ENCODE measurements at regions of chr19 and their contacts with region 1.

Region 1: DNA sequence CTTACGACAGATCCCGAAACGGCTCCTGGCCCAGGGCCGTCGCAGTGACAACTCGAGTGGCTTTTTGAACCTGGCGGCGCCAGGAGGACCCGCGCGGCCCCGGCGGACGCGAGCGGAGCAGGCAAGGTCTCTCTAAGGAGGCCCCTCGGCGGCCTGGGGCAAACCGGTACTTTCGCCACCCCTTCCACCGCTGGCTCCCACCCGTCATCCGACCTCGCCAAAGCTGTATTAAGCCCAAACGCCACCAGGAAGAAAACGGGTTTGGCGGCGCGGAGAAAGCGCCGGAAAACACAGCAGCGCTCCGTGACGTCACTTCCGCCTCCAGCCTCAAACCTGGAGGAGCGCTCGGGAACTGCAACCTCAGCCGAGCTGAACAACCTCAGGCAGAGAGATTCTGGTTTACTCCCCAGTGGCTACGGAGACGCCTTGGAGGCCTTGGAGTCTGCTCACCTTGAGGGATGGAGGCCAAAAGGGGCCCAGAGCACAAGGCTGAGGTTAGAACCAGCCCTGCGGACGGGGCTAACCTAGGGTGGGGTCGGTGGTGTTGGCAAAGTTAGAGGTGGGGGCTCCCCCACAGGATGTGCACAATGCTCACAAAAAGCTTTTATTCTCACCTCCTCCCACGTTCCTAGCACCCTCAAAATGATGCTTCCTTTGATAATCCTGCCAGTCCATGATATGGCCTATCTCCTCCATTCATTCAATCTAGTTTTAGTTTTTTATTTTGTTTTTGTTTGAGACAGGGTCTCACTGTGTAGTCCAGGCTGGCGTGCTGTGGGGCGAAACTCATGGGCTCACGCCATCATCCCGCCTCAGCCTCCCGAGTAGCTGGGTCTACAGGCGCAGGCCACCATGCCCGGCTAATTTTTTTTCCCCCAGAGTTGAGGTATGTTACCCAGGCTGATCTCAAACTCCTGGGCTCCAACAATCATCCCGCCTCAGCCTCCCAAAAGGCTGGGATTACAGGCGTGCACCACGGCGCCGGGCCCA is at the start of gene ZNF266:
- DNase-seq: peak; percentile 95
- ATAC-seq: peak; percentile 92
- H3K4me3 Mint-ChIP-seq: peak within 1 kb of the TSS; percentile 97
- H3K27ac Mint-ChIP-seq: peak within 1 kb of the TSS; percentile 99
- H3K4me1 Mint-ChIP-seq: peaks cover 28% of the 10 kb centered on the region
- H3K27me3 Mint-ChIP-seq: no peaks in the 10 kb centered on the region
- total RNA-seq, gene ZNF266: 25.3 to 25.5 TPM

Region 2: GRCh38 chr19:9205501-9206113 is 230.0 kb before region 1 on chr19:
- CTCF ChIA-PET with region 1: interaction called, 12 read pairs
- POLR2A ChIA-PET with region 1: no interaction called
- DNase-seq: peak; percentile 74
- ATAC-seq: peak; percentile 64
- H3K4me3 Mint-ChIP-seq: peak overlapping the region; percentile 23
- H3K27ac Mint-ChIP-seq: no peak overlapping the region
- H3K4me1 Mint-ChIP-seq: peaks cover 5% of the 10 kb centered on the region
- H3K27me3 Mint-ChIP-seq: no peaks in the 10 kb centered on the region

Region 3: DNA sequence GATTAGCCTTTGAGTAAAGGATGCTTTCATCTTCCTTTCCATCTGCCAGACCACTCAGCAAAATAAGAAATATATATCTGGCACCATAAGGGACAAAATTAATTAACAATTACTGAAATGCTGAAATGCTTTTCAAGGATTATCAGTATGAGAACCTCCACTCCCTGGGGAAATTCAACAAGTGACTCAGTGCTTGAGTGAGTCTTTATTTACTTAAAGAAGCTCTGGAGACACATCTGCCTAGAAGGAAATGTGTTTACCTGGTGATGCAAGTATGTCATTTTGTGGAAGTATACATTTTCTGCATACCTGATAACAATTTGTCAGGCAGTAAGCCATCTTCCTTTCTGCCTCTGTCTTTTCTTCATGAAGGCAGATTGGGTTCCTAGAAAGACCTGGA is 39.4 kb after region 1 on chr19:
- CTCF ChIA-PET with region 1: no interaction called
- POLR2A ChIA-PET with region 1: no interaction called
- DNase-seq: no peak
- ATAC-seq: no peak
- H3K4me3 Mint-ChIP-seq: no peak overlapping the region
- H3K27ac Mint-ChIP-seq: no peak overlapping the region
- H3K4me1 Mint-ChIP-seq: no peaks in the 10 kb centered on the region
- H3K27me3 Mint-ChIP-seq: no peaks in the 10 kb centered on the region

Region 4: DNA sequence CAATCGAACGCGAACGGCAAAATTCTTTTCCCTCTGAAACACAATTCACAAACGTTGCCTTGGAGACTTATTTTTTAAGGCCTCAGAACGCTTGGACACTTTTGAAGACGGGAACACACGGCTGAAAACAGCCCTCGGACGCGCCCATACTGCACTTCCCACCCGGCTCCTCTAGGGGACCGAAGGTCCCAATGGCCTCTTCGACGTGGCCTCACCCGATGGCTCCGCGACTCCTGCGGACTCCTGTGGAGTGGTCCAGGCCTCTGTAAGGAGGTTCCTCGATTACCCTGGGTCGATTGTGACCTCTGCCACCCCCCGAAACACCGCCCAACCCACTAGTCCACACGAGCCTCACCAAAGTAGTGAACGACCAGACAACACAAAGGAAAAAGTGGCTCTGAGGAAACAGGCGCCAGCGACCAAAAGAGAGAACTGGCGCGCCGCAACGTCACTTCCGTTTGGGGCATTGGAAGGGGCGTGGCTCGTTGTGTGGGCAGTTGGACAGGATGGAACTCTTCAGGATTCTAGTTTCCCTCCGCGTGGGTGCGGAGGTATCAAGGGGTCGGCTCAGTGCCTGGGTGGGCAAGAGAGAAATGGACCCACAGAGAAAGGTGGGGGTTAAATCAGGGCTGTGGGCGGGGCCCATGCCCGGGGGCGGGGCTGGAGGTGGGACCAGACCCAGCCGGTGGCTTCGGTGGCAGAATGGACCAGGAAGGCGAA is 62.8 kb after region 1 on chr19 and contains the start of gene ZNF560:
- CTCF ChIA-PET with region 1: no interaction called
- POLR2A ChIA-PET with region 1: no interaction called
- DNase-seq: peak; percentile 38
- ATAC-seq: no peak
- H3K4me3 Mint-ChIP-seq: peak within 1 kb of the TSS; percentile 62
- H3K27ac Mint-ChIP-seq: peak within 1 kb of the TSS; percentile 64
- H3K4me1 Mint-ChIP-seq: peaks cover 10% of the 10 kb centered on the region
- H3K27me3 Mint-ChIP-seq: no peaks in the 10 kb centered on the region
- total RNA-seq, gene ZNF560: 0.40 TPM in 1 of 2 experiments, not detected in the other

Region 5: GRCh38 chr19:9690746-9691145 is 255.2 kb after region 1 on chr19:
- CTCF ChIA-PET with region 1: no interaction called
- POLR2A ChIA-PET with region 1: no interaction called
- DNase-seq: no peak
- ATAC-seq: no peak
- H3K4me3 Mint-ChIP-seq: no peak overlapping the region
- H3K27ac Mint-ChIP-seq: no peak overlapping the region
- H3K4me1 Mint-ChIP-seq: no peaks in the 10 kb centered on the region
- H3K27me3 Mint-ChIP-seq: no peaks in the 10 kb centered on the region